ENCODE measurements at regions of chr21 and their contacts with region 1.

Region 1: DNA sequence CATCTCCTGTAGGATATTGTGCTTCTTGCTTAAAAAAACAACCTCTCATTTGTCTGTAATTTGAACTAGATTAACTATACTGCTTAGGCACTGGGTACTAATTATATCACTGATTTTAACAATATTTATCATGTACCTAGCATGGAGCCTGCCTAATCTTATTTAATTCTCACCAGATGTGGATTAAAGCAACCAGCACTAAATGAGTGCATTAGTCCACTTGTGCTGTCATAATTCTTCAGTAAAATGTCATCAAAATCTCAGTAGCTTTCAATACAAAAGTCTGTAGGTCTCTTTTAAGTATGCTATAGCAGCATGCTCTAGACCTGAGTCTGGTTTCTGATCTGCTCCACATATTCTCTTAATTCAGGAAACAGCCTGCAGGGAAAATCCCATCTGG is 368.1 kb downstream of the NCAM2 start:
- DNase-seq: no peak

Region 2: GRCh38 chr21:21101911-21102310 is 264.4 kb before region 1 on chr21:
- intact Hi-C with region 1: loop called (anchors 10 kb)
- DNase-seq: peak in 3 of 10 donors; percentile 16 to 83 (median 51)

Region 3: DNA sequence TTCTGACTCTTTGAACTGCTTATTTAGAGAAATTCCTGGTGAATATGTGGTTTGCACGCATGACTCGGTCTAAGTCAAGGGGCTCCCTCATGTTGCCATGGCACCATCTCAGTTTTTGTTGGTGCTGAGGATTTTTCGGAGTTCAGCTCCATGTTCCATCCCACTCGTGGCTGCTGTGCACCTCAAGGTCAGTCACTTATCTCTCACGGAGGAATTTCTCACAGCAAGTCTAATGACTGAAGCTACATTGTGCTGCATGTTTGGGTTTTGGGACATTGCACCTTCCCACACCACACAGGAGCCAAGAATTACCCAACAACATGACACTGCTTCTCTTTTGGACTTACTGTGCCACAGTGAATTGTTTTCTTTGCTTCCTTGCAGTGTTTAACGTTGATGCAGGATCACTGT is 98.2 kb before region 1 on chr21:
- intact Hi-C with region 1: no loop called
- DNase-seq: peak in 4 of 10 donors; percentile 5 to 51 (median 28)

Measured in posterior cingulate gyrus (tissue), 11 donors.